Esophagus squamous epithelium (tissue), 5 donors: ENCODE measurements at regions of chr18 and their contacts with region 1.

Region 1: DNA sequence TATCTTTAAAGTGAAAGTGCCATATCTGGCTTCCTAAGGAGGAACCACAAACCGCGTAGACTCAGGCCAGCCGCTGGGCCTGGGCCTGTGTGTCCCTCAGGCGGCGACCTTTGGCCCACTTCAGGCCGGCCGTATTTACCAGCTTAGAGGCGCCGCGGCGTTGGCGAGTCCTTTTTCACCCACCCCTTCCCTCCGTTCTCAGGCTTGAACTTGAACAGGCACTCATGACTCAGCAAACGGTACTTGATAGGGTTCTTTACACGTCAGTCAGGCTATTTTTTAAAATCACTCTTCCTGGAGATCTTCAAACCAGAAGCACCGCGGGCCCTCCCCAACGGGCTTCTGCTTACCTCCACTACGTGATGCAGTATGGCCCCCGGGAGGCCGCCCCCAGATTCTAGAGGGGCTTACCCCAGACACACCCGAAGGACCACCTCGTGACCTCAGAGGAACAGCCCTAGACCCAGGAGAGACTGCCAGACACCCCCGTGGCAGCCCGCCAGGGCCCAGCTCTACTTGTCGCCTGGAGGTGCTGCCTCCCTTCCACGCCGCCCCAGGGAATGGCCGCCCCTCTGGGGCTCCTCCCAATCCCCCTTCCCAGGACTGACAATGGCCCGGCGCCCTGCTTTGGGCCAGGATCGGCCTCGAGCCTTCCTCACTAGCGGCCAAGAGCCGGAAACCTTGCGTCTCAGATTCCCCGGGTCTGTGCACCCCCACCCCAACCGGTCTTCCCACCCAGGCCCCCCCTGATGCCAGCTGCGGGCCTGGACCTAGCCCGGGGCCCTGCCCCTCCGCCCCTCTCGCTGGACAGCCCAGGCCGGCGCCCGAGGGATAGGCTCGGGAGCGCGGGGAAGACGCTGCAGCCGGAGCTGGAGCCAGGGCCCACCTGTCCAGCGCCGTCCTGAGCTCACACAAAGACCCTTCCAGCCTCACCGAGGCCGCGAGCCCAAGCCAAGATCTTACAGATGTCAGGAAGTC is 33.8 kb upstream of the IMPA2 start:
- DNase-seq: peak; percentile 24
- H3K4me3 ChIP-seq: peak overlapping the region; percentile 36 to 67 (median 62)
- H3K27ac ChIP-seq: peak overlapping the region; percentile 94 to 98 (median 96)
- H3K4me1 ChIP-seq: peaks cover 20 to 71% (median 36%) of the 10 kb centered on the region in 3 donors
- H3K27me3 ChIP-seq: no peaks in the 10 kb centered on the region
- CTCF ChIP-seq: peak in 2 of 6 experiments; percentile 11 to 14
- POLR2A ChIP-seq: peak in 3 of 4 donors; percentile 38 to 83 (median 55)

Region 2: DNA sequence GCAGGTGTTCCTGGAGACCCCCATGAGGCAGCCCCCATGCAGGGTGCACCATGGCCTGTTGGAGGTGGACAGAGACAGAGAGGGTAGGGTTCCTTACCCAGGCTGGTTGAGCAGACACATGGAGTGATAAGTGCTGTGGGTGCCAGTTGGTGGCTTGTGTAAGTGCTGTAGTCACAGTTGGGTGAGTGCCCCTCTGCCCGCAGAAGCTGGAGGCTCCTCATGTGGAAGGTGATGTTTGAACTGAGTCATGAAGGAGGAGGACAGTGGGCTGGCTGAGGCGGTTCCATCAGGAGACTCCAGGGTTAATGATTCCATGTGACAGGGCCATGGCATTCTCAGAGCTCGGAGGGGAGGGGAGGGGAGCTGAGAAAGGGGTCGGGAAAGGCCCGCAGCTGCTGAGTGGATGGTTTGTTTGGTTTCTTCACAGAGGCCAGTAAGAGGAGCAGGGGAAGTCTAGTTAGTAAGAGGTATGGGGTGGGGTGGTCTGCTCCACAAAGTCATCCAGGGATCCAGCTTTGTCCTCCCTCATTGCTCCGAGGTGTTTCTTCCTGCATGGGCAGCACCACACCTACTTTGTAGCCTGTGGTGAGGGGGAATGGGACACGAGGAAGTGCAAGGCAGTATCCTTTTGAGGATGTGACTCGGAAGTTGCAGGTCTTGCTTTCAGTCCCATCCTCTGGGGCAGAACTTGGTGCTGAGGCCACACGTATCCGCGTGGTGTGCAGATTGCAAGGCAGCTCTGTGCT is 47.4 kb after region 1 on chr18:
- intact Hi-C with region 1: loop called (anchors 5 kb)
- DNase-seq: no peak
- H3K4me3 ChIP-seq: peak overlapping the region in 1 of 4 donors; percentile 1
- H3K27ac ChIP-seq: peak overlapping the region; percentile 62 to 96 (median 65)
- H3K4me1 ChIP-seq: peaks cover 29 to 83% (median 56%) of the 10 kb centered on the region in 3 donors
- H3K27me3 ChIP-seq: no peaks in the 10 kb centered on the region
- CTCF ChIP-seq: no peak
- POLR2A ChIP-seq: no peak